PC-3 (cell line): ENCODE measurements at regions of chr5 and their contacts with region 1.

Region 1: GRCh38 chr5:60677844-60678664 is 21.9 kb downstream of the DEPDC1B start:
- DNase-seq: peak; percentile 82
- ATAC-seq: peak; percentile 91
- H3K4me3 ChIP-seq: peak overlapping the region; percentile 7; the same call in 1 of the 2 replicates
- H3K27ac ChIP-seq: peak overlapping the region; percentile 65
- H3K4me1 ChIP-seq: peaks cover 23% of the 10 kb centered on the region
- H3K27me3 ChIP-seq: no peaks in the 10 kb centered on the region
- CTCF ChIP-seq: peak; percentile 70

Region 2: DNA sequence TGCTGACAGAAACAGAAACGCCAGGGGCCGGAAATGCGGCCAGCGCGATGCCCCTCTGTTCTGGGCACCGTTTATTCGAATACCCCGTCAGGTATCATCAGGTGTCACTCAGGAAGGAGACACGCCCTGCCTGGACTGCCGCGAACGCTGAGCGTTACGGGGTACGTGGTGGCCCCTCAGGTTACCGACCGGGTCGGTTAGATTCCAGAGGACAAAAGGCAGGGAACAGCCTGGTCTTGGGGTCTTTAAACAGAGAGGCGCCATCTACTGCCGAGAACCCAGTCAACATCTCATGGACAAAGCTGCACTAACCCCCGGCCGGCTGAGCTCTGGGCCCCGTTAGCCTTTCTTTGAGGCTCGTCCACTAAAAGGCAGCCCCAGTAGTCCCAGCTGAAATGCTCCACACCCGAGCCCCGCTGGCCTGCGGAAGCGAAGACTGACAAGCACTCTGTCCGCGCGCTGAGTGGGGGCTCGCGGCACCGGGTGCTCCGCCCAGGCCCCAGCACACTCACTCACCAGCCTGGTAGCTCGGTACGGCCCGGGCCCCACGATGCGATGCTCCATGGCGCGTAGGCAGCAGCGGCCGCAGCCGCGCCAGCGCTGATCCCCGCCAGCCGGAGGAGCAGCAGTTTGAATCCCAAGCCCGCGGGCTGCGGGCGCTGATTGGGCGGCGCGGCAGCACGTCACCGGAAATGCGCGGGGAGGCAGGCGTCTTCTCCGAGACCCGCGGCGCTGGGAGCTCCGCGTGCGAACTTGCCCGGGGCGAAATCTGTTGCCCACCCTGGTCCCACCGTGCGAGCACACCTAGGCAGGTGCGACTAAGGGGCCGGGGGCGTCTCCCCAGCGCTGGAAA is 21.7 kb after region 1 on chr5 and contains the start of gene DEPDC1B:
- CTCF ChIA-PET with region 1: interaction called, 10 read pairs
- POLR2A ChIA-PET with region 1: no interaction called
- intact Hi-C with region 1: loop called (anchors 1 kb)
- DNase-seq: peak; percentile 79
- ATAC-seq: peak; percentile 85
- H3K4me3 ChIP-seq: peak within 1 kb of the TSS; percentile 95
- H3K27ac ChIP-seq: peak within 1 kb of the TSS; percentile 79
- H3K4me1 ChIP-seq: peaks cover 35% of the 10 kb centered on the region
- H3K27me3 ChIP-seq: no peaks in the 10 kb centered on the region
- CTCF ChIP-seq: peak; percentile 40
- total RNA-seq, gene DEPDC1B: 22.7 and 23.8 TPM in 2 replicates

Region 3: DNA sequence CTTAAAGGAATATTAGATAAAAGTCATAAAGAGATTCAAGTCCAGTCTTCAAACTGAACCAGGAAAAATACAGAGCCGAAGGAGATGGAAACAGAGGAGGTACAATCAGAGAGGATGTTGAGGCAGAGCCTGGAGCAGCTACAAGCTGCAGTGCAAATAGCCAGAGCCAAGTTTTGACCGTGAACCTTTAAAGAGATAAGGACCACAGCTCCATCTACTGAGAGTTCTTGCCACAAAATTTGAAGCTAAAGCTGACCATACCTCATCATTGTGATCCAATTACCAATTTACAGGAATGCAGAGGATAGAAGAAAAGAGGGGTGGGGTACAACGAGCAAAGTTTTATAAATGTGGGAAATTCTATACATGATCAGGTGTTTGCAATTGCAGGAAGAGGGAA is 32.3 kb after region 1 on chr5:
- CTCF ChIA-PET with region 1: no interaction called
- POLR2A ChIA-PET with region 1: no interaction called
- intact Hi-C with region 1: loop called (anchors 1 kb)
- DNase-seq: no peak
- ATAC-seq: peak; percentile 65
- H3K4me3 ChIP-seq: no peak overlapping the region
- H3K27ac ChIP-seq: no peak overlapping the region
- H3K4me1 ChIP-seq: no peaks in the 10 kb centered on the region
- H3K27me3 ChIP-seq: no peaks in the 10 kb centered on the region
- CTCF ChIP-seq: no peak; the same call in 1 of the 2 replicates

Region 4: DNA sequence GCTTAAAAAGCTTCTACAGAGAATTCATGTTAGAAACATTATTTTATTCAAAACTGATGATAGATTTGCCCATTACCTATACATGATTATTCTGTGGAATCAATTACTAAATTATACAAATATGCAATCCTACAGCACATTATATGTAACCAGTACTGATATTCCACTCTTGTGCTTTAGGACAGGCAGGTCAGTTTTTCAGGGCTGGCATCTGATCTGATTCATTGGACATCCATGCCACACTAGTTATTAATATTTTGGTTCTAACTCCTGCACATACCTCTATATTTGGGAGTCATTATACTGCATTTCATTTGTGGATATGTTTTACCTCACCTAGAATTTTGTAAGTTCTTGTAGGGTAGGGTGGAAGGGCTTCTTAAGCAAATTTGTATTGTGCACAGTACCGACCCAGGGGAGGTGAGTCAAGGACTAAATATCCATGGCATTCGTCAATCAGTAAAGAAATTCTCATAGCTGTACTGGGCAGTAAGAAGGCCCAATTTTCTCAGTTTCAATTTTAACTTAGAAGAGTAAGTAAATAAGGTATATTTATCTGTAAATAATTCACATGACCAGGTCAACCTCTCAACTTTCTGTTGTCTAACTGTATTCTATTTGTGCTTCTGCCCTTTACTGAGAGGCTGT is 132.5 kb after region 1 on chr5:
- CTCF ChIA-PET with region 1: no interaction called
- POLR2A ChIA-PET with region 1: no interaction called
- intact Hi-C with region 1: loop called (anchors 1 kb)
- DNase-seq: peak; percentile 74
- ATAC-seq: peak; percentile 99
- H3K4me3 ChIP-seq: peak overlapping the region; percentile 22; the same call in 1 of the 2 replicates
- H3K27ac ChIP-seq: no peak overlapping the region
- H3K4me1 ChIP-seq: peaks cover 22% of the 10 kb centered on the region
- H3K27me3 ChIP-seq: no peaks in the 10 kb centered on the region
- CTCF ChIP-seq: no peak

Region 5: GRCh38 chr5:60843936-60844905 is 166.2 kb after region 1 on chr5 and contains the start of gene ELOVL7:
- CTCF ChIA-PET with region 1: no interaction called
- POLR2A ChIA-PET with region 1: interaction called, 5 read pairs
- intact Hi-C with region 1: loop called (anchors 2 kb)
- DNase-seq: peak; percentile 35
- ATAC-seq: peak; percentile 90
- H3K4me3 ChIP-seq: peak within 1 kb of the TSS; percentile 57
- H3K27ac ChIP-seq: no peak within 1 kb of the TSS
- H3K4me1 ChIP-seq: no peaks in the 10 kb centered on the region
- H3K27me3 ChIP-seq: no peaks in the 10 kb centered on the region
- CTCF ChIP-seq: no peak
- total RNA-seq, gene ELOVL7: 0.69 and 1.2 TPM in 2 replicates

Region 6: DNA sequence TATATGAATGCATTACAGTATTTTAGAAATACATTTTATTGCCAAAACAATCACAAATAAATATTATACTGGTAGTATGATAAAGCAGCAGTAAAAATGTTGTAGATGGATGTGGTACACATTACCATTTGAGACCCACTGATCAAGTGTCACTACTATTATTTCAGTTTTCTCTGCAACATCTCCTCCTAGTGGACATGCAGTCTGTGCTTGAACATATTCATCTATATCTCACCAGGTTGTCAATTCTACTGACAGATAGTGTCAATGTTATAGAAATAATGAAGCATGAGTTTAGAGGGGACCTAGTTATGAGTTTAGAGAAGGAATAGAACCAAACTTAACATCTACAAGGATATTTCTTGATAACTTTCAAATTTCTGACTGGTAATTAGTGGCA is 205.2 kb after region 1 on chr5:
- CTCF ChIA-PET with region 1: no interaction called
- POLR2A ChIA-PET with region 1: no interaction called
- intact Hi-C with region 1: loop called (anchors 1 kb)
- DNase-seq: peak; percentile 11
- ATAC-seq: no peak
- H3K4me3 ChIP-seq: no peak overlapping the region
- H3K27ac ChIP-seq: no peak overlapping the region
- H3K4me1 ChIP-seq: no peaks in the 10 kb centered on the region
- H3K27me3 ChIP-seq: no peaks in the 10 kb centered on the region
- CTCF ChIP-seq: peak; percentile 39; the same call in 1 of the 2 replicates

Region 7: GRCh38 chr5:60929024-60929423 is 251.0 kb after region 1 on chr5:
- CTCF ChIA-PET with region 1: no interaction called
- POLR2A ChIA-PET with region 1: no interaction called
- intact Hi-C with region 1: loop called (anchors 1 kb)
- DNase-seq: no peak
- ATAC-seq: no peak
- H3K4me3 ChIP-seq: no peak overlapping the region
- H3K27ac ChIP-seq: no peak overlapping the region
- H3K4me1 ChIP-seq: no peaks in the 10 kb centered on the region
- H3K27me3 ChIP-seq: no peaks in the 10 kb centered on the region
- CTCF ChIP-seq: no peak; the same call in 1 of the 2 replicates

Region 8: GRCh38 chr5:61342071-61342501 is 664.0 kb after region 1 on chr5:
- CTCF ChIA-PET with region 1: no interaction called
- POLR2A ChIA-PET with region 1: no interaction called
- intact Hi-C with region 1: no loop called
- DNase-seq: peak; percentile 53
- ATAC-seq: peak; percentile 71
- H3K4me3 ChIP-seq: no peak overlapping the region
- H3K27ac ChIP-seq: no peak overlapping the region
- H3K4me1 ChIP-seq: peaks cover 10% of the 10 kb centered on the region
- H3K27me3 ChIP-seq: no peaks in the 10 kb centered on the region
- CTCF ChIP-seq: no peak